Activated CD4-positive, alpha-beta T cell treated with anti-CD3 and anti-CD28 coated beads, Interleukin-2, amount 10 ng/mL, durations not matched to agents 24 days and 14 days (primary cell): ENCODE measurements at regions of chr5 and their contacts with region 1.

Region 1: DNA sequence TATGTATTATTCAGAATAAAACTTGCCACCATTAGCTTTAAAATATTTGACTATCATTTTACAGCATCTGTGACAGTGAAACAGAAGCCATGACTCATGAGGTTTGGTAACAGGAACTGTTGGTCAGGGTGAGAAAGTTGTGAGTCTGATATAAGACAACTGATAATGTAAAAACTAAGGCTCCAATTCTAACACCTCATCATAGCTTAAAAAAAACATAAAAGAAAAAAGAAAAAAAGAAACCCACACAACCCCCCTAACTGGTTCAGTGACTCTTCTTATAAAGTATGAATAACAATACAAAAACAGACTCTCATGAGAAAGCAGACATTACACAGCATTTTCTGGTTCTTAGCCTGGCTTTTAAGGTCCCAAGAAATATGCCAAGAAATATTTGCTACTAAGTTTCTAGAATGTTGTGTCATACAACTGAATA is 85.8 kb downstream of the MRPS27 start:
- DNase-seq: peak; percentile 75
- H3K4me3 Mint-ChIP-seq: no peak overlapping the region
- H3K27ac Mint-ChIP-seq: peak overlapping the region; percentile 7
- H3K4me1 Mint-ChIP-seq: peaks cover 31% of the 10 kb centered on the region
- H3K27me3 Mint-ChIP-seq: peaks cover 12% of the 10 kb centered on the region

Region 2: DNA sequence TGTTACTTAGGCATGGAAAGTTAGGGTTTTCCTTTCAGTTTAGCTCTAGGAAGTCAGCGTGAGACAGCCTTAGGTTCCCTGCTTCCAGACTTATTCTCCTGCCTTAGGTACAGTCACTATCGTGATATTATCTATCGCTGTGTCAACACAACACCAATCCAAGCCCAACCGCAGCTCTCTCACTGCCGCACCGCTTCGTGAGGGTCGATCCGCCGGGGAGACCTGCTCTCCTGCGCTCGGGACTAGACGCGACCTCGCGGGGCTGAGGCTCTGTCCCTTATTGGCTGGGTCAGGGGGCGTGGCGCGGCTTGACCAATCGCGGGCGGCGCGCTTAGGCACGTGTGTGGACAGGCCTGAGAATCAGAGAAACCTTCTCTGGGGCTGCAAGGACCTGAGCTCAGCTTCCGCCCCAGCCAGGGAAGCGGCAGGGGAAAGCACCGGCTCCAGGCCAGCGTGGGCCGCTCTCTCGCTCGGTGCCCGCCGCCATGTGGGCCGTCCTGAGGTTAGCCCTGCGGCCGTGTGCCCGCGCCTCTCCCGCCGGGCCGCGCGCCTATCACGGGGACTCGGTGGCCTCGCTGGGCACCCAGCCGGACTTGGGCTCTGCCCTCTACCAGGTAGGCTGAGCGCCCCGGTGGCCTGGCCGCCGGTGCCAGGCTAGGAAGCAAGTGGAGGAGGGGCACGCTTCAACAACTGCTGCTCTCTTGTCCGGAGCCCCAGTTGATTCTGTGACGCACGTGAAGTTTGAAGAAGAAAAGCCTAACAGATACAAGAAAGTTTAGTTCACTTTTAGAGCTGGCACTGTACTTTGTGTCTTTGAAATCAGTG is 647.1 kb before region 1 on chr5 and contains the start of gene MCCC2:
- intact Hi-C with region 1: loop called (anchors 10 kb)
- DNase-seq: peak; percentile 99
- H3K4me3 Mint-ChIP-seq: peak within 1 kb of the TSS; percentile 89
- H3K27ac Mint-ChIP-seq: peak within 1 kb of the TSS; percentile 99
- H3K4me1 Mint-ChIP-seq: peaks cover 31% of the 10 kb centered on the region
- H3K27me3 Mint-ChIP-seq: no peaks in the 10 kb centered on the region
- total RNA-seq, gene MCCC2: 58.7 and 58.9 TPM in 2 replicates

Region 3: GRCh38 chr5:72138943-72139521 is 95.3 kb before region 1 on chr5:
- intact Hi-C with region 1: loop called (anchors 1 kb)
- DNase-seq: peak; percentile 56
- H3K4me3 Mint-ChIP-seq: no peak overlapping the region
- H3K27ac Mint-ChIP-seq: no peak overlapping the region
- H3K4me1 Mint-ChIP-seq: peaks cover 8% of the 10 kb centered on the region
- H3K27me3 Mint-ChIP-seq: peaks cover 53% of the 10 kb centered on the region

Region 4: DNA sequence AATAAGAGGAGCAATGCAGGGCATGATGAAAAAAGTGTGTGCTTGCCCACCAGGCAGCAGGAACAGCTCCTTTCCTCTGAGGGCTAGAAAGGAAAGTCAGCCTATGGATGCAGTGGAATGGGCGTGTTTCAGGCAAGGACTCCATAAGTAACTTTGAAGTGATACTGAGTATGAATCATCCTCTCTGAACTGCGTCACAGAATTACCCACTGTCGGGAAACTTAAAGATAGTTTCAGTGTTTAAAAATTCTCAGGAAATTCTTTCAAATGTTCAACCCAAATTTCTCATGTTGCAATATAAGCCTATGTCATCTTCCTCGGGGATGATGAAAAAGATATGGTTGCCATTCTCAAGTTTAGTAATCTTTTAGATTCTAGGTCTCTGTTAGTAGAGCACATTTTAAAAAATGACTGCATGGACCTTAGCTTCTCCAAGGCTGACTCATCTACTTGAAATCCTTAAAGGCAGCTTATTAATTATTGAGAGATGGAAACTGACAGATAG is 113.6 kb after region 1 on chr5:
- intact Hi-C with region 1: loop called (anchors 5 kb)
- DNase-seq: no peak
- H3K4me3 Mint-ChIP-seq: no peak overlapping the region
- H3K27ac Mint-ChIP-seq: peak overlapping the region; percentile 64
- H3K4me1 Mint-ChIP-seq: peaks cover 21% of the 10 kb centered on the region
- H3K27me3 Mint-ChIP-seq: no peaks in the 10 kb centered on the region